BJ (cell line): ENCODE measurements at regions of chr1 and their contacts with region 1.

Region 1: DNA sequence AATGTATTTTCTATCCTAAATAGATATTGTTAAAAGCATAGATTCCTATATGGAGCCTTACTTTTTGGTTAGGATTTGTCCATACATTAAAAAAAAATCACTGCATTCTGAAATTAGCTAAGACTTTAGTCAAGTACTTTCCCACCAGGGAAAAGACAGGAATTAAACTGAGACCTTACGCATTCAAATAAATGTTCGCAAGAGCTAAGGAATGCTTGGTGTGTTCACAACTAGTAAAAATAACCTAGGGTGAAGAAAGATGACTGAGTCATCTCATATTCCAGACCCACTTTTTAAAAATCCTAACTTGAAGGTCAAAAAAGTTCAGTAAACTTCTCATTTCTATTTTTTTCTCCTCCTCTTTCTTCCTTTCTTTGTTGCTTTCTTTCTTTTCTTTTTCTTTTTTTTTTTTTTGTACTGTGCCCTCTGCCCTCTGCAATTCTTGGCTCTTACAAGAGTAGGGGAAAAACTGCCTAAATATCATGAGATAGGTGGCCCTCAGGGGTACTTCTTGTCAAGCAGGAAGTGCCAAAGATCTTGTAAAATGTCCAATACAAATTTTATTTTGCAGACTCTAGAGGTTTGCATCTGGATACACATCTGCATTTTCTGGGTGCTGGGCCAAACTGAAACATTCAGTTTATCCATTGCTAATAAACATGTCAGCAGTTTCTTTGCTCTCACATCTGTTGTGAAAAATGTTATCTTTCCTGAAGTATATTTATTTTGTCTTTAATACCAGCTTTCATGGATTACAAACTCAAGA is 121.4 kb upstream of the GORAB start:
- DNase-seq: peak; percentile 71
- H3K4me3 ChIP-seq: no peak overlapping the region
- H3K27me3 ChIP-seq: no peaks in the 10 kb centered on the region
- CTCF ChIP-seq: no peak

Region 2: DNA sequence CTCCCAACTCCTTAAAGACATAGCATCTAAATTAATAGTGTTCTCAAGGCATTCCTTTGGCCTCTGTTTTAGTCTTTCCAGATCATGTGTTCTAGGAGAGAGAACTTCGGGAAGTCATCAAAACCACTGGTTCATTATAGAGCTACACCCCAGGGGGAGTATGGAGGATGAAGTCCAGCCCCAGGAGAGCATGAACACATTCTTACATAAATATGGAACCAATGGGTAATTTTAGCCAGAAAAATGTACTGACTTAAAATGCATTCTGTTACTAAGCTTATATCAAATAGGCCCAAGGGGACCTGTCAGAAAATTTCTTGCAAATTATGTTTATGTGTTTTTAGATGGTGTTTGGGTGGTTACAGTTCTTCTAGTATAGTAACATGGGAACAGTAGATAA is 99.6 kb before region 1 on chr1:
- CTCF ChIA-PET with region 1: no interaction called
- POLR2A ChIA-PET with region 1: interaction called, 12 read pairs
- DNase-seq: no peak
- H3K4me3 ChIP-seq: no peak overlapping the region
- H3K27me3 ChIP-seq: no peaks in the 10 kb centered on the region
- CTCF ChIP-seq: no peak

Region 3: DNA sequence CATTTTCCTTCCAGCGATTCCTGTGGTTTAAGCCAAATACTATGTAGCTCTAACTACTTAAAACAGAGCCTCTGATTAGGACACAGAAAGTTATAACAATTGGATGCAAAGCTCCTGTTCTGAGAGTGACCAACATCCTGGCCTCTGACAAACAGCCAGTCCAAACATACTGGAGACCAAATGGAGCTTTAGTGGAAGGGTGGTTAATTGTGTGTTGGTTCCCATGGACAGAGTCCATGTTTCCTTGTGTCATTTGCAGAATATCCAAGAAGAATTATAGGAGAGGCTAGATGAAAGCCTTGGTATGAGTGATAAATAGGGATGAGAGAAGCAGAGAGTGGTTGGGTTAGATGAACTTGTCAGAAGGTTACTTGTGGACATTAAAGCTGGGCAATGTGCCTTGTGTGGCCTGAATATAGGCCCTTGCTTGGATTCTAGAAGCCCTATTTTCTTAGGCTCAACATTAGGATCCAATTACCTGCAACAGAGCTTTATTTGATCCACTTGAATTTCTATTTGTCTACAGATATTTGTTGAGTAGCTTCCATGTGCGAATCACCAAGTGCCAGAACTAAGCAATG is 59.1 kb before region 1 on chr1:
- CTCF ChIA-PET with region 1: no interaction called
- POLR2A ChIA-PET with region 1: no interaction called
- DNase-seq: no peak
- H3K4me3 ChIP-seq: no peak overlapping the region
- H3K27me3 ChIP-seq: no peaks in the 10 kb centered on the region
- CTCF ChIP-seq: no peak